B cell (primary cell): ENCODE measurements at regions of chr5 and their contacts with region 1.

Region 1: DNA sequence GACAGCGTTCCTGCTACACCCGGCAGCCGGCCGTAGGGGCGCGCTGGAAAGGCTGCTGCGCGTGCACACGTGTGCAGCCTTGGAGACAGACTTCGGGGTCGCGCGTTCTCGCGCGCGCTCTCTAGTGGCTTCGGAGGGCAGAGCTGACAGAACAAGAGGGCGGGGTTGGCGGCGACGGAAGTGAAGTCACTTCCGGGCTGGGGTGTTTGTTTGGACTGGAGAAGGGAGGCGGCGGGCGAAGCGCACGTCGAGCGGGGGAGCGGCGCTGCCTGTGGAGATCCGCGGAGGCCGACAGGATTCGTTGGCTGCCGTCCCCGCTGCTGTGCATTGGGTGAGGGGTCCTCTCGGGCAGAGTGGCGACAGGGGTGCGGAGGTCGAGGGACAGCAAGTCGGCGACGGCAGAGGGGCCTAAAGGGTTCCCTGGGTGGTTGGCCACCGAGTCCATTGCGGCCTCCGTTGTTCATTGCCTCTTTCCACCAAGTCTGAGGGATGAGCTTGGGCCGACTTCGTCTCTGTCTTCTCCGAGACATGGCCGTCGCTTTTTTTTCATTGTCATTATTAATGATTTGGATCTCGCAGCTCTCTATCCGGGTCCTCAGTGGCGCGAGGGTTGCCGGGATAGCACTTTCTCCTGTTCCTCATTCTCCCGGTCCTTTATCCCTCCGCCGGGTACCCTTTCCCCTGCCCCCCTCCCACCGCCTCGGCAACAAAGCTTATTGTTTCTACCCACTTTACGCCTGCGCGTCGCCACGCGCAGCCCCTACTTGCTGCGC is at the start of gene PAIP2:
- DNase-seq: peak; percentile 98
- ATAC-seq: peak; percentile 89
- H3K4me3 ChIP-seq: peak within 1 kb of the TSS; percentile 63 to 99 (median 98)
- H3K4me3 Mint-ChIP-seq: peak within 1 kb of the TSS; percentile 100
- H3K27ac ChIP-seq: peak within 1 kb of the TSS; percentile 91 to 96
- H3K27ac Mint-ChIP-seq: peak within 1 kb of the TSS; percentile 100
- H3K4me1 ChIP-seq: peaks cover 29 to 31% of the 10 kb centered on the region in 2 donors
- H3K4me1 Mint-ChIP-seq: peaks cover 48% of the 10 kb centered on the region
- H3K27me3 ChIP-seq: no peaks in the 10 kb centered on the region
- H3K27me3 Mint-ChIP-seq: no peaks in the 10 kb centered on the region
- CTCF ChIP-seq: peak; percentile 72
- total RNA-seq, gene PAIP2: 109 and 121 TPM in 2 replicates

Region 2: DNA sequence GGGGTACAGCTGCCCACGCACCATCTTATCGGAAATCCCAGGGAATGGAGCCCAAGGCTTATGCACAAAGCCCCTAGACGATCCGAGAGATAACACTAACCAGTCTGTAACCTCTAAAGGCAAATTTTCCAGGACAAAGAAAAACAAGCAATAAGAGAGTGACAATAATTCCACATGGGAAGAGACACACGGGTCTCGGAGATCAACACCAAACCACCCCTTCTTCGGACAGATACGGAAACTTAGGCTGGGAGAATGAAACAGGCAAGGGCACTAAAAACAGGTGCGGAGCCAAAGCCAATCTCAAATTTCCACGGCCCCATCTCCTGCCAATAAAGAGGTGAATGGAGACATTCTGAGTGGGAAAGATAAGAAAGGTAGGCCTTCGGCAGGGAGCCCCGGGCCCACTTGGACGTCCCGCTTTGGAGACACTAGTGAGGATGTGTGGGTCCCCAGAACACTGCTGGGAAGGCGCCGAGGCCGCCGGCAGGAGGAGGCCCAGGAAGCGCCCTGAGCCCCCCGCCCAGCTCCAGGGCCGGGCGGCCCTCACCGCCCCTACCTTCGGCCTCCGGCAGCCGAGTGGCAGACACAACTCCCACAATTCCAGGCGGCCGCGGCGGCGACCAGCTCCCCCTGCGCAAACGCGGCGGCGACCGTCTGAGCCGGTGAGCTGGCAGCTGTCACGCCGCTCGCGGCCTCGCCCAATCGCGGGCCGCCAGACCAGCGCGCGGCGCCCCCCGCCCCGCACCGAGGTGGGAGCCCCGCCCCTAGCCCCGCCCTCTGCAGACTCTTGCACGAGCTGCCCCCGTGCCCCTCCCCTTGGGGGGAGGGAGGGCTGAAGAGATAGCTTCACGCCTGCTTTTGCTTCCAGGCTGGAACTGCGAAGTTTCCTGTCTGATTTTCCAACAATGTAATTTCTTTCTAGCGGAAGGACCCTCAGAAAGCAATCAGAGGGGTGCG is 143.8 kb before region 1 on chr5 and contains the start of gene SIL1:
- CTCF ChIA-PET with region 1: interaction called, 3 read pairs
- POLR2A ChIA-PET with region 1: no interaction called
- intact Hi-C with region 1: loop called (anchors 1 kb)
- DNase-seq: peak; percentile 96
- ATAC-seq: peak; percentile 98
- H3K4me3 ChIP-seq: peak within 1 kb of the TSS; percentile 56 to 90 (median 71)
- H3K4me3 Mint-ChIP-seq: peak within 1 kb of the TSS; percentile 88
- H3K27ac ChIP-seq: peak within 1 kb of the TSS; percentile 81 to 96
- H3K27ac Mint-ChIP-seq: peak within 1 kb of the TSS; percentile 87
- H3K4me1 ChIP-seq: peaks cover 17 to 21% of the 10 kb centered on the region in 2 donors
- H3K4me1 Mint-ChIP-seq: peaks cover 19% of the 10 kb centered on the region
- H3K27me3 ChIP-seq: no peaks in the 10 kb centered on the region
- H3K27me3 Mint-ChIP-seq: no peaks in the 10 kb centered on the region
- CTCF ChIP-seq: no peak
- total RNA-seq, gene SIL1: 17.9 and 19.8 TPM in 2 replicates

Region 3: GRCh38 chr5:139273572-139274289 is 68.1 kb before region 1 on chr5:
- CTCF ChIA-PET with region 1: interaction called, 6 read pairs
- POLR2A ChIA-PET with region 1: interaction called, 5 read pairs
- intact Hi-C with region 1: loop called (anchors 1 kb)
- DNase-seq: peak; percentile 95
- ATAC-seq: peak; percentile 98
- H3K4me3 ChIP-seq: peak overlapping the region; percentile 61 to 86 (median 75)
- H3K4me3 Mint-ChIP-seq: peak overlapping the region; percentile 92
- H3K27ac ChIP-seq: peak overlapping the region; percentile 62 to 74
- H3K27ac Mint-ChIP-seq: peak overlapping the region; percentile 91
- H3K4me1 ChIP-seq: peaks cover 32 to 44% of the 10 kb centered on the region in 2 donors
- H3K4me1 Mint-ChIP-seq: peaks cover 46% of the 10 kb centered on the region
- H3K27me3 ChIP-seq: no peaks in the 10 kb centered on the region
- H3K27me3 Mint-ChIP-seq: no peaks in the 10 kb centered on the region
- CTCF ChIP-seq: no peak

Region 4: DNA sequence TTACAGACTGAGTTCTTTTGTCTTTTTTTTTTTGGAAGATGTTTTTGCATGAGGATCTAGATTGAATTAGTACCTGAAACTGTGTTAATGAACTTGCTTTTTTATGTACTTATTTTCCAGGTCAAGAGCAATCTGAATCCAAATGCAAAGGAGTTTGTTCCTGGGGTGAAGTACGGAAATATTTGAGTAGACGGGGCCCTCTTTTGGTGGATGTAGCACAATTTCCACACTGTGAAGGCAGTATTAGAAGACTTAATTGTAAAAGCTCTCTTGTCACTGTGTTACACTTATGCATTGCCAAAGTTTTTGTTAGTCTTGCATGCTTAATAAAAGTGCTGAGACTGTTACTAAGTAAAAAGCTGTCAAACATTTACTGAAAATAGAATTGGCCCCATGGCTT is 26.8 kb after region 1 on chr5:
- CTCF ChIA-PET with region 1: interaction called, 10 read pairs
- POLR2A ChIA-PET with region 1: interaction called, 3 read pairs
- intact Hi-C with region 1: no loop called
- DNase-seq: no peak
- ATAC-seq: no peak
- H3K4me3 ChIP-seq: no peak overlapping the region
- H3K4me3 Mint-ChIP-seq: no peak overlapping the region
- H3K27ac ChIP-seq: no peak overlapping the region
- H3K27ac Mint-ChIP-seq: no peak overlapping the region
- H3K4me1 ChIP-seq: no peaks in the 10 kb centered on the region
- H3K4me1 Mint-ChIP-seq: no peaks in the 10 kb centered on the region
- H3K27me3 ChIP-seq: no peaks in the 10 kb centered on the region
- H3K27me3 Mint-ChIP-seq: no peaks in the 10 kb centered on the region
- CTCF ChIP-seq: no peak

Region 5: GRCh38 chr5:139374909-139375308 is 33.1 kb after region 1 on chr5:
- CTCF ChIA-PET with region 1: interaction called, 10 read pairs
- POLR2A ChIA-PET with region 1: interaction called, 11 read pairs
- intact Hi-C with region 1: no loop called
- DNase-seq: peak; percentile 10
- ATAC-seq: no peak
- H3K4me3 ChIP-seq: no peak overlapping the region
- H3K4me3 Mint-ChIP-seq: no peak overlapping the region
- H3K27ac ChIP-seq: no peak overlapping the region
- H3K27ac Mint-ChIP-seq: peak overlapping the region; percentile 17
- H3K4me1 ChIP-seq: no peaks in the 10 kb centered on the region
- H3K4me1 Mint-ChIP-seq: peaks cover 3% of the 10 kb centered on the region
- H3K27me3 ChIP-seq: no peaks in the 10 kb centered on the region
- H3K27me3 Mint-ChIP-seq: no peaks in the 10 kb centered on the region
- CTCF ChIP-seq: no peak

Region 6: DNA sequence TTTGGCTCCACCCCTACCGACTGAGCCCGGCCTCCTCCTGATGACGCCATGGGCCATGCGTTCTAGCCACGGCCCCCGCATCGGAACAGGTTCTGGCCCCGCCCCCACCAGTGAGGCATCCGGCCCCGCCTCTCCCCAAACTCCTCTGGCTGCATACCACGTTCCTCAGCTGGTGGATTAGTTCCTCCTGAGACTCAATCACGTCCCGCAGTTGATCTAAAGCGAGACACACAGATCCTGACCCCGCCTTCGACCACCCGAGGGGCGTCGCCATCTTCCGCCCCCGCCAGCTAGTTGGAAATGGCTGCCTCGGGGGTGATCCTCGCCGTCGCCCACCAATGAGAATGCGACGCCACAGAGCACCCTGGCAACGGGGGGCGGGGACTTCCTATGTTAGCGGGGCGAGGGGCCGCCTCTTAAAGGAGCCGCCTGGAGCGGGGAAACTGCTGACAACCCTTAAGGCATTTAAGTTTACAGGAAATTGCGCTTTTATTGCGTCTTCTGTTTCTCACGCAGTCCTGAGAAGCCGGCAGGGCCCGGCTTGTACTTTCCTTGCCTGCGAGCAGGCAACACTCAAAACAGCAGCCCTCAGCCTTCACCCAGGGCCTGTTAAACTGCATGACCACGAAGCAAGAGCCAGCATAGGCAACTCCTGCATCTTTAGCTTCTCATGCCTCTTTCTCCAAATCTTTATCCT is 62.1 kb after region 1 on chr5 and contains the start of gene SPATA24:
- CTCF ChIA-PET with region 1: interaction called, 7 read pairs
- POLR2A ChIA-PET with region 1: interaction called, 4 read pairs
- intact Hi-C with region 1: loop called (anchors 1 kb)
- DNase-seq: peak; percentile 99
- ATAC-seq: peak; percentile 85
- H3K4me3 ChIP-seq: peak within 1 kb of the TSS; percentile 50 to 73 (median 68)
- H3K4me3 Mint-ChIP-seq: peak within 1 kb of the TSS; percentile 95
- H3K27ac ChIP-seq: peak within 1 kb of the TSS; percentile 85 to 86
- H3K27ac Mint-ChIP-seq: peak within 1 kb of the TSS; percentile 97
- H3K4me1 ChIP-seq: peaks cover 33 to 43% of the 10 kb centered on the region in 2 donors
- H3K4me1 Mint-ChIP-seq: peaks cover 43% of the 10 kb centered on the region
- H3K27me3 ChIP-seq: no peaks in the 10 kb centered on the region
- H3K27me3 Mint-ChIP-seq: no peaks in the 10 kb centered on the region
- CTCF ChIP-seq: no peak
- total RNA-seq, gene SPATA24: 6.4 and 8.2 TPM in 2 replicates

Region 7: GRCh38 chr5:139468421-139468931 is 126.6 kb after region 1 on chr5:
- CTCF ChIA-PET with region 1: no interaction called
- POLR2A ChIA-PET with region 1: no interaction called
- intact Hi-C with region 1: no loop called
- DNase-seq: no peak
- ATAC-seq: no peak
- H3K4me3 ChIP-seq: no peak overlapping the region
- H3K4me3 Mint-ChIP-seq: no peak overlapping the region
- H3K27ac ChIP-seq: no peak overlapping the region
- H3K27ac Mint-ChIP-seq: no peak overlapping the region
- H3K4me1 ChIP-seq: peaks cover 8 to 11% of the 10 kb centered on the region in 2 donors
- H3K4me1 Mint-ChIP-seq: peaks cover 8% of the 10 kb centered on the region
- H3K27me3 ChIP-seq: peaks cover 0 to 9% (median 4%) of the 10 kb centered on the region in 4 experiments
- H3K27me3 Mint-ChIP-seq: peaks cover 16% of the 10 kb centered on the region
- CTCF ChIP-seq: no peak